ENCODE measurements at regions of chr1 and their contacts with region 1.

Region 1: GRCh38 chr1:3054474-3054873 is 14.5 kb upstream of the PRDM16 start:
- DNase-seq: peak; percentile 48

Region 2: DNA sequence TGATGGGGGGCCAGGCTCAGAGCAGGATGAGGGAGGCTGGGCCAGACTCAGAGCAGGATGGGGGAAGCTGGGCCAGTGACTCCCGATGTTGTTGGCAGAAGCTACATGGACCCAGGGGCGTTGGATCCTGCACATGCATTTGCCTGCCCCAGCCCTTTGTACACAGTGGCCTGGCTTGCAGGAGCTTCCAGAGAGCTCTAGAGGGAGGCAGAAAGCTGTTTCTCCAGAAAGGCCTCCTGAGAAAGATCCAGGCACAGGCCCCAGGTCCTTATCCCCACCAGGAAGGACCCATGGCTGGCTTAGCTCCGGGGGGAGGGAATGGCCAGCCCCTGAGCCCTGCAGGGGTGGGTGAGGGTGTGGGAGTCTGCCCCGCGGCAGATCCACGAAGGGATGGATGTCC is 139.8 kb before region 1 on chr1:
- intact Hi-C with region 1: loop called in 1 of 2 experiments (anchors 10 kb)
- DNase-seq: no peak

Region 3: GRCh38 chr1:3035563-3036460 is 18.7 kb before region 1 on chr1:
- intact Hi-C with region 1: loop called in 1 of 2 experiments (anchors 1 kb)
- DNase-seq: peak; percentile 62

Region 4: DNA sequence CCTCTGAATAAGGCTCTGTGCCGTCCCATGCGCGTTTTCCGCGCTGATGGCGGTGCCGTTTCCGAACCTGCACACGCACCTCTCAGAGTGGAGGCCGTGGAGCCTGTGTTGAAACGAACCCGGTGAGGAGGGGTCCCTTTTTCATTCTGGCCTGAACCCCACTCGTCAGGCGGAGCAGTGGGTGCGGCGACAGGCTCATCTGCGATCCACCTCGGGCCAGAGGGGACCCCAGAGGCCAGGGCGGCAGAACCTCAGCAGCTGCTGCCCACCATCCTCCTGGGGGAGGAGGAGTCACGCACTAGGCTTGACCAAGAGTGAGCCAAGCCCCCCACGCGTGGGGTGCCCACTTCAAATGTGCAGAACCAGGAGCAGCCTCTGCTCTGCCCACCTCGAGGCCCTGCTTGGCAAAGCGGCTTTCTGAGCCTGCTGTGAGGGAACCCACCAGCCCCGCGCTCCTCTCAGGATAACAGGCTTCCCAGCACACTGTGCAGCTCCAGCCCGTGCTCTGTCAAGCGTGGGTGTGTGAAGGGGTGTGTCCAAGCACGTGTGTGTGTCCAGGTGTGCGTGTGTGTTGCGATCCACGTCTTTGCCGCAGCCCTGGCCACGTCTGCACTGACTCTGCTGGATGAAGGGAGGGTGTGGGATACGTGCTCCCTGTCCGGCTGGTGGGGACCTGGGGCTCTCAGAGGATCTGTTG is 21.3 kb after region 1 on chr1:
- intact Hi-C with region 1: loop called in 1 of 2 experiments (anchors 1 kb)
- DNase-seq: no peak

Region 5: DNA sequence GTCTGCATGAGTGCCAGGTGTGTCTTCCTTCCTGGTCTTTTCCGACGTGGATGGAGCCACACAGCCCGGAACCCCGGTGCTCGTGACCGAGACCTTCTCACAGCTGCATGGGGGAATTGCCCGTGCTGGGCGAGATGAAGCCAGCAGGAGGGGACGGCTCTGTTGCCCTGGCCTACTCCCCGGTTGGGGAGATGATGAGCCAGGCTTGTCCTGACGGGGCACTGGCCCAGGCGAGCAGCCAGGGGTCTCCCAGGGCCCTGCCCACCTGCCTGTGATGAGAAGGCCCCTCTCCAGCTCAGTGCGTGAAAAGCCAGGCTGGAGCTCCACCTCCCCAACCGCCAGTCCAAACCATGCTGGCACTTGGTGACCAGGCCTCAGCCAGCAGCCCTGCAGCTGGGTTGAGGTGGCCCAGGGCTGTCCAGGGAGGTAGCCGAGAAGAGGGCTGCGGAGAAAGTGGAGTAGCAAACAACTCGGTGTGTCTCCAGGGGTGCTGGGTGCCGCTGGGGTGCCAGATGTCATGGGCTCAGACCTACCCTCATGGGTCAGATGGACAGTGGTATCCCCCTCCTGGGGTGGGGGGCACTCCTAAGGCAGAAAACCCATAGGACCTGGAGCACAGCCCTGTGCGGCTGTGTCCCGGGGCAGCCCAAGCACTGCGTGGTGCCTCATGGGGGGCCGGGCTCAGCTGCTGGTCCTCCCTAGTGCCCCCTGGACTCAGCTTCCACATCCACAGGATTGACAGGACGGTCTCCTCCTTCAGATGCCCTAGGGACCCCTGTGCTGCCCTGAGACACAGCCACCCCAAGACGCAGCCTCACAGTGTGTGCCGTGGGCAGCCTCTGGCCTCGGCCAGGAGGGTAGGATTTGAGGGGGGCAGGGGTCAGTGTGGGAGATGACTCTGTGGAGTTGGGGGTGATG is 40.6 kb after region 1 on chr1:
- intact Hi-C with region 1: loop called in 1 of 2 experiments (anchors 1 kb)
- DNase-seq: no peak

Region 6: GRCh38 chr1:3631330-3632262 is 577.1 kb after region 1 on chr1:
- intact Hi-C with region 1: loop called in 1 of 2 experiments (anchors 5 kb)
- DNase-seq: no peak

Region 7: GRCh38 chr1:3869751-3870301 is 815.4 kb after region 1 on chr1:
- intact Hi-C with region 1: no loop called
- DNase-seq: no peak